Dendritic cell treated with granulocyte-macrophage colony-stimulating factor and Interleukin-4, amounts not matched to agents 40 ng/mL and 50 ng/mL, for 4 days (primary cell): ENCODE measurements at regions of chr20 and their contacts with region 1.

Region 1: GRCh38 chr20:3786665-3787323 is at the start of gene CENPB:
- H3K4me3 Mint-ChIP-seq: peak within 1 kb of the TSS; percentile 81
- H3K27ac Mint-ChIP-seq: peak within 1 kb of the TSS; percentile 78
- H3K4me1 Mint-ChIP-seq: peaks cover 48% of the 10 kb centered on the region
- H3K27me3 Mint-ChIP-seq: peaks cover 3% of the 10 kb centered on the region

Region 2: GRCh38 chr20:3580412-3580811 is 206.4 kb before region 1 on chr20:
- intact Hi-C with region 1: no loop called
- H3K4me3 Mint-ChIP-seq: no peak overlapping the region
- H3K27ac Mint-ChIP-seq: no peak overlapping the region
- H3K4me1 Mint-ChIP-seq: peaks cover 5% of the 10 kb centered on the region
- H3K27me3 Mint-ChIP-seq: no peaks in the 10 kb centered on the region

Region 3: DNA sequence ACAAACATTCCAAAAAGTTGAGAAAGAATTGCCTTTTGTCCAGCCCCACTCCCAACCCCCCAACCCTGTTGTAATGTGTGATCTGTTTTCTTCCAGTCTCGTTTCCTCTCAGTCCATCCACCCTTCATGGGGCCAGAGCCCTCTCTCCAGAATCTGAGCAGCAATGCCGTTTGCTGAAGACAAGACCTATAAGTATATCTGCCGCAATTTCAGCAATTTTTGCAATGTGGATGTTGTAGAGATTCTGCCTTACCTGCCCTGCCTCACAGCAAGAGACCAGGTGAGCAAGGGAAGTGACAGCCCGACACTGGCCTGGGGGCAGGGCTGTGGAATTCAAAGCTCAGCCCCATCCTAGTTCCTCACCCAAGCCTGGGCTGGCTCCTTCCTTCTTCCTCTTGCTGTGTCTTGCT is 67.7 kb after region 1 on chr20:
- intact Hi-C with region 1: loop called (anchors 1 kb)
- H3K4me3 Mint-ChIP-seq: peak overlapping the region; percentile 35
- H3K27ac Mint-ChIP-seq: peak overlapping the region; percentile 61
- H3K4me1 Mint-ChIP-seq: peaks cover 37% of the 10 kb centered on the region
- H3K27me3 Mint-ChIP-seq: no peaks in the 10 kb centered on the region